Thyroid gland (tissue), 4 donors: ENCODE measurements at regions of chr5 and their contacts with region 1.

Region 1: DNA sequence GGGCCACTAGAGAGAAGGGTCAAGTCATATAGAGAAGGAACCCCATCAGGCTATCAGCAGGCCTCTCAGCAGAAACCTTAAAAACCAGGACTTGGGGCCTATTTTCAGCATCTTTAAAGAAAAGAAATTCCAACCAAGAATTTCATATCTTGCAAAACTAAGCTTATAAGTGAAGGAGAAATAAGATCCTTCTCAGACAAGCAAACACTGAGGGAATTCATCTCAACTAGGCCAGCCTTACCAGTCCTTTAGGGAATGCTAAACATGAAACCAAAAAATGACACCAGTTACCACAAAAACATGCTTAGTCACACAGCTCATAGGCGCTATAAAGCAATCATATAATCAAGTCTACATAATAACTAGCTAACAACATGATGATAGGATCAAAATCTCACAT is 407.1 kb downstream of the LRRC70 start:
- DNase-seq: no peak
- H3K4me3 ChIP-seq: no peak overlapping the region
- H3K27ac ChIP-seq: no peak overlapping the region
- H3K4me1 ChIP-seq: no peaks in the 10 kb centered on the region
- H3K27me3 ChIP-seq: no peaks in the 10 kb centered on the region
- CTCF ChIP-seq: no peak
- POLR2A ChIP-seq: no peak

Region 2: DNA sequence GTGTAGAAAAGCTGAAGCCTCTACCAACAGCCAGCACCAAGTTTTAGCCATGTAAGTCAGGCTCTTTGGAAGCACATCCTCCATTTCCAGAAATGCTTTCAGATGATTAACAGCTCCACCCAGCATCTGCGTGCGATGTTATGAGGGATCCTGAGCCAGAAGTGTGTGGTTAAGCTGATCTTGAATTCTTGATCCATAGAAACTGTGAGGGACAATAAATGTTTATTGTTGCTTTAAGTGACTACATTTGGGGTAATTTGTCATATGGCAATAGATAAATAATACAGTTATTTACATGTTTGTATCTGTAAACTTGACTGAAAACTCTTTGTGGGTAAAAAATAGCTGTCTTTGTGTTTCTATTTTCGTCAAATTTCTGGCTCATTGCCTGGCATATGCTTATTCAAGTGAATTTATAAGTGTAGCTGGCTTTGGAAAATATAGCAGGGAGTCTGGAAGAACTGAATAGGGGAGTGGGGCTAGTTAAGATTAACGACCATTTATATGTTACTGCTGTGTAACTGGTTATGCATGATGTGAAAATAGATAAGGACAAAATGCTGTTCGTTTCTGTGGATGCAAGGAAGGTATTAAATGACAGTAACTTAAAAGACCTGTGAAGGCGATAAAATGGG is 173.0 kb before region 1 on chr5:
- intact Hi-C with region 1: no loop called
- DNase-seq: no peak
- H3K4me3 ChIP-seq: no peak overlapping the region
- H3K27ac ChIP-seq: no peak overlapping the region
- H3K4me1 ChIP-seq: no peaks in the 10 kb centered on the region
- H3K27me3 ChIP-seq: no peaks in the 10 kb centered on the region
- CTCF ChIP-seq: no peak
- POLR2A ChIP-seq: no peak

Region 3: GRCh38 chr5:63101870-63102269 is 116.1 kb after region 1 on chr5:
- intact Hi-C with region 1: loop called (anchors 10 kb)
- DNase-seq: no peak
- H3K4me3 ChIP-seq: no peak overlapping the region
- H3K27ac ChIP-seq: no peak overlapping the region
- H3K4me1 ChIP-seq: peaks cover 0 to 3% of the 10 kb centered on the region in 2 donors
- H3K27me3 ChIP-seq: no peaks in the 10 kb centered on the region
- CTCF ChIP-seq: no peak
- POLR2A ChIP-seq: no peak

Region 4: GRCh38 chr5:63125862-63126261 is 140.1 kb after region 1 on chr5:
- intact Hi-C with region 1: no loop called
- DNase-seq: no peak
- H3K4me3 ChIP-seq: no peak overlapping the region
- H3K27ac ChIP-seq: no peak overlapping the region
- H3K4me1 ChIP-seq: no peaks in the 10 kb centered on the region
- H3K27me3 ChIP-seq: no peaks in the 10 kb centered on the region
- CTCF ChIP-seq: peak in 3 of 6 experiments; percentile 23 to 39 (median 30)
- POLR2A ChIP-seq: no peak